ENCODE measurements at regions of chr1 and their contacts with region 1.

Region 1: GRCh38 chr1:64453688-64454087 is 16.2 kb upstream of the CACHD1 start:
- DNase-seq: no peak
- ATAC-seq: no peak
- H3K4me3 ChIP-seq: no peak overlapping the region
- H3K27ac ChIP-seq: no peak overlapping the region
- H3K4me1 ChIP-seq: no peaks in the 10 kb centered on the region
- H3K27me3 ChIP-seq: no peaks in the 10 kb centered on the region
- CTCF ChIP-seq: no peak

Region 2: DNA sequence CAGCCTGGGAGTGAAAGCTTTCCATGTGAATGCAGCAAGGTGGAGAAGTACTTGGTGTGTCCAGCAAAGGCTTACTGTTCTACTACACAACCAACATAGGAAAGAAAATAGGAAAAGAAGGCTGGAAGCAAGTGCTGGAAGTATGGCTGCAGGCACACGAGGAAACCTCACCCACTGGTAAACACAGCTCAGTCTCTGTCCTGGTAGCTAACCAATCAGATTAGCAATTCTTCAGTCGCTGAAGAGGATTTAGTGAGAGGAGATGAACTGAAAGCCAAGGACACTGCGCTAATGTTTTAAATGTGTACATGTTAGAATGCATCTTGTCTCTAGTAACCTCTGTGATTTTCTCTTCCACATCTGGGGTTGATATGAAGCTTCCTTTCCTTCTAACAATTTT is 19.9 kb before region 1 on chr1:
- CTCF ChIA-PET with region 1: no interaction called
- POLR2A ChIA-PET with region 1: interaction called, 10 read pairs
- in situ Hi-C with region 1: no loop called
- intact Hi-C with region 1: no loop called
- DNase-seq: no peak
- ATAC-seq: no peak
- H3K4me3 ChIP-seq: no peak overlapping the region
- H3K27ac ChIP-seq: no peak overlapping the region
- H3K4me1 ChIP-seq: no peaks in the 10 kb centered on the region
- H3K27me3 ChIP-seq: no peaks in the 10 kb centered on the region
- CTCF ChIP-seq: no peak